ENCODE measurements at regions of chr14 and their contacts with region 1.

Region 1: GRCh38 chr14:24135834-24136542 is at the start of gene PSME1:
- DNase-seq: peak; percentile 94
- ATAC-seq: peak; percentile 97
- H3K4me3 Mint-ChIP-seq: peak within 1 kb of the TSS; percentile 91
- H3K27ac Mint-ChIP-seq: peak within 1 kb of the TSS; percentile 90
- H3K4me1 Mint-ChIP-seq: peaks cover 57% of the 10 kb centered on the region
- H3K27me3 Mint-ChIP-seq: no peaks in the 10 kb centered on the region
- CTCF ChIP-seq: no peak
- total RNA-seq, gene PSME1: 406 and 449 TPM in 2 replicates

Region 2: DNA sequence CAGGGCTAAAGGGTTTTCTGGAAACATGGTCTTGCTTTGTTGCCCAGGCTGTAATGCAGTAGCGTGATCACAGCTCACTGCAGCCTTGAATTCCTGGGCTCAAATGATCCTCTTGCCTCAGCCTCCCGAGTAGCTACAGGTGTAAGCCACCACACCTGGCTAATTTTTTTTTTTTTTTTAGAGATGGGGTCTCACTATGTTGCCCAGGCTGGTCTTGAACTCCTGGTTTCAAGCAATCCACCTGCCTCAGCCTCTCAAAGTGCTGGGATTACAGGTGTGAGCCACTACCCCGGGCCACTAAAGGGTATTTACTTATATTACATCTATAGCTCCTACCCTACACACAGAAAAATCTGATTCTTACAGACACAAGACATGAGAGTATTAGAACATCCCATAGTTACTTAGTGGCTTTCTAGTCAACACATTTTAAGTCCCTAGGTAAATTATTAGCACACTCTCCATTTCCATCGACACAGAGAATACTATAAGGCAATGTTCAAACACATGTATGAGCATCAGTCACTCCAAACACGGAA is 27.6 kb before region 1 on chr14:
- CTCF ChIA-PET with region 1: interaction called, 13 read pairs
- POLR2A ChIA-PET with region 1: interaction called, 239 read pairs
- intact Hi-C with region 1: no loop called
- DNase-seq: no peak
- ATAC-seq: no peak
- H3K4me3 Mint-ChIP-seq: no peak overlapping the region
- H3K27ac Mint-ChIP-seq: peak overlapping the region; percentile 90
- H3K4me1 Mint-ChIP-seq: peaks cover 12% of the 10 kb centered on the region
- H3K27me3 Mint-ChIP-seq: no peaks in the 10 kb centered on the region
- CTCF ChIP-seq: no peak

Region 3: GRCh38 chr14:24123508-24124417 is 12.2 kb before region 1 on chr14:
- CTCF ChIA-PET with region 1: interaction called, 5 read pairs
- POLR2A ChIA-PET with region 1: interaction called, 239 read pairs
- intact Hi-C with region 1: loop called (anchors 1 kb)
- DNase-seq: no peak
- ATAC-seq: peak; percentile 83
- H3K4me3 Mint-ChIP-seq: peak overlapping the region; percentile 52
- H3K27ac Mint-ChIP-seq: peak overlapping the region; percentile 93
- H3K4me1 Mint-ChIP-seq: peaks cover 38% of the 10 kb centered on the region
- H3K27me3 Mint-ChIP-seq: no peaks in the 10 kb centered on the region
- CTCF ChIP-seq: no peak

Region 4: DNA sequence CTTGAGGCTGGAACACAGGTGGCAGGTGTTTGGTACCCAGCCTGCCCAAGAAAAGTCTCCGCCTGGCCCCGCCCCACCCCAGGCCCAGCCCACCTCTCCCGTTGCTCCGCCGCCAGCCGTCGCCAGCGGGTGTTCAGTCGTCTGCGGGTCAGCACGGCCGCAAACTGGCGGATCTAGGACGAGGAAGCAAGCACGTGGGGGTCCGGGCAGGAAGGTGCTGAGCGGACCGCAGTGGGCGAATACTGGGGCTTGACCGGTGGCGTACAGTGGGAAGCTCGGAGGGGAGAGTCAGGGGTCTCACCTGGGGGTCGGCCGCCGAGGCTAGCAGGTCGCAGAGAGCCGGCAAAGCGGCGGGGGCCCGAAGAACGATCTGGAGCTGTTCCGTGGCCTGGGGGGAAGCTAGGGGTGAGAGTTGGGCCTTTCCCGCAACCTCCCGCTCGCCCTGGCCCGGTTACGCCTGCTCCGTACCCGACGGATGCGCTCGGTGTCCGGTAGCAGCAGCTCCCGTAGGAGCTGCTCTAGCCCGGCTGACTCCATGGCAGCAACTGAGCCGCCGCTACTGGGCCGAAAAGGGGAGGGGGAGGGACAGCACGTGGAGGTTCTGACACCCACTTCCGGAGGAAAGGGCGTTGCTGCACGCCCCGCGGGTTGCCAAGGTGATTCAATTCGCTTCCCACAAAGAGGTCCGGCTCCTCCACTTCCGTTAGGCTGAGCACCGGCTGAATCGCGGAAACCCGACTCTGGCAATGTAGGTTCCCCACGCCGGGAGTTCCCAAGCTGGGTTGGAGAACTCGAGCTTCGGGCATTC is 52.5 kb after region 1 on chr14 and contains the start of gene IPO4:
- CTCF ChIA-PET with region 1: no interaction called
- POLR2A ChIA-PET with region 1: interaction called, 13 read pairs
- intact Hi-C with region 1: loop called (anchors 1 kb)
- DNase-seq: peak; percentile 81
- ATAC-seq: peak; percentile 92
- H3K4me3 Mint-ChIP-seq: peak within 1 kb of the TSS; percentile 91
- H3K27ac Mint-ChIP-seq: peak within 1 kb of the TSS; percentile 87
- H3K4me1 Mint-ChIP-seq: peaks cover 32% of the 10 kb centered on the region
- H3K27me3 Mint-ChIP-seq: no peaks in the 10 kb centered on the region
- CTCF ChIP-seq: no peak
- total RNA-seq, gene IPO4: 76.4 and 80.3 TPM in 2 replicates

Region 5: GRCh38 chr14:24195191-24196070 is 59.4 kb after region 1 on chr14 and contains the start of gene TM9SF1:
- CTCF ChIA-PET with region 1: no interaction called
- POLR2A ChIA-PET with region 1: interaction called, 20 read pairs
- intact Hi-C with region 1: no loop called
- DNase-seq: peak; percentile 91
- ATAC-seq: peak; percentile 83
- H3K4me3 Mint-ChIP-seq: peak within 1 kb of the TSS; percentile 96
- H3K27ac Mint-ChIP-seq: peak within 1 kb of the TSS; percentile 97
- H3K4me1 Mint-ChIP-seq: peaks cover 48% of the 10 kb centered on the region
- H3K27me3 Mint-ChIP-seq: no peaks in the 10 kb centered on the region
- CTCF ChIP-seq: no peak
- total RNA-seq, gene TM9SF1: 24.5 and 26.3 TPM in 2 replicates

Region 6: GRCh38 chr14:24556756-24557155 is 420.8 kb after region 1 on chr14:
- CTCF ChIA-PET with region 1: no interaction called
- POLR2A ChIA-PET with region 1: no interaction called
- intact Hi-C with region 1: no loop called
- DNase-seq: no peak
- ATAC-seq: no peak
- H3K4me3 Mint-ChIP-seq: no peak overlapping the region
- H3K27ac Mint-ChIP-seq: no peak overlapping the region
- H3K4me1 Mint-ChIP-seq: no peaks in the 10 kb centered on the region
- H3K27me3 Mint-ChIP-seq: peaks cover 23% of the 10 kb centered on the region
- CTCF ChIP-seq: no peak

Measured in activated B cell treated with CpG ODN at 0.5 μM for 24 hours (primary cell).